Lower lobe of right lung (tissue), 2 donors: ENCODE measurements at regions of chr12 and their contacts with region 1.

Region 1: DNA sequence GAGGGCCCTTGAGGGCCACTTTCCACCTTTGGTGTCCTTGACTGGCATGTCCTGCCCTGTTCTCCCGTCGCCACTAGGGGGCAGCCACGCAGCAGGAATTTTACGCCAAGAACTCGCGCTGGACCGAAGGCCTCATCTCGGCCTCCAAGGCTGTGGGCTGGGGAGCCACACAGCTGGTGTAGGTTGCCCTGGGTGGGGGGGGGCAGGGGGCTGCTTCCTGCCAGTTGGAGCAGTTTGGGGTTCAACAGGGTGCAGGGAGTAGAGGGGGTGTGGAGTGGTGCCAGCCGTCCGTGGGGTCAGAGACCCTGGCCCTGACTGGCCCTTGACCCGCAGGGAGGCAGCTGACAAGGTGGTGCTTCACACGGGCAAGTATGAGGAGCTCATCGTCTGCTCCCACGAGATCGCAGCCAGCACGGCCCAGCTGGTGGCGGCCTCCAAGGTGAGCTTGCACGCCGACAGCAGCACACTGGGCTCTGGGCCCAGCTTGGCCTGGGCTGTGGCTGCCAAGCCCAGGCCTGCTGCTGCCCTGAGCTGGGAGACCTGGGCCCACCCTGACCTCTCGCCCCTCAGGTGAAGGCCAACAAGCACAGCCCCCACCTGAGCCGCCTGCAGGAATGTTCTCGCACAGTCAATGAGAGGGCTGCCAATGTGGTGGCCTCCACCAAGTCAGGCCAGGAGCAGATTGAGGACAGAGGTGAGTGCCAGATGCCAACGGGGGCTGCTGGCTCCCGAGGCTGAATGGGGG is 25.3 kb downstream of the HIP1R start:
- DNase-seq: peak; percentile 88
- ATAC-seq: peak; percentile 68 to 70
- H3K4me3 ChIP-seq: no peak overlapping the region
- H3K27ac ChIP-seq: peak overlapping the region; percentile 41
- H3K4me1 ChIP-seq: peaks cover 35% of the 10 kb centered on the region
- H3K27me3 ChIP-seq: no peaks in the 10 kb centered on the region
- CTCF ChIP-seq: peak; percentile 90

Region 2: GRCh38 chr12:122951979-122952892 is 91.7 kb after region 1 on chr12:
- intact Hi-C with region 1: loop called (anchors 5 kb)
- DNase-seq: peak; percentile 82
- ATAC-seq: peak; percentile 93 to 96
- H3K4me3 ChIP-seq: no peak overlapping the region
- H3K27ac ChIP-seq: no peak overlapping the region
- H3K4me1 ChIP-seq: peaks cover 7% of the 10 kb centered on the region
- H3K27me3 ChIP-seq: no peaks in the 10 kb centered on the region
- CTCF ChIP-seq: peak; percentile 94